Naive thymus-derived CD8-positive, alpha-beta T cell (primary cell): ENCODE measurements at regions of chrX and their contacts with region 1.

Region 1: DNA sequence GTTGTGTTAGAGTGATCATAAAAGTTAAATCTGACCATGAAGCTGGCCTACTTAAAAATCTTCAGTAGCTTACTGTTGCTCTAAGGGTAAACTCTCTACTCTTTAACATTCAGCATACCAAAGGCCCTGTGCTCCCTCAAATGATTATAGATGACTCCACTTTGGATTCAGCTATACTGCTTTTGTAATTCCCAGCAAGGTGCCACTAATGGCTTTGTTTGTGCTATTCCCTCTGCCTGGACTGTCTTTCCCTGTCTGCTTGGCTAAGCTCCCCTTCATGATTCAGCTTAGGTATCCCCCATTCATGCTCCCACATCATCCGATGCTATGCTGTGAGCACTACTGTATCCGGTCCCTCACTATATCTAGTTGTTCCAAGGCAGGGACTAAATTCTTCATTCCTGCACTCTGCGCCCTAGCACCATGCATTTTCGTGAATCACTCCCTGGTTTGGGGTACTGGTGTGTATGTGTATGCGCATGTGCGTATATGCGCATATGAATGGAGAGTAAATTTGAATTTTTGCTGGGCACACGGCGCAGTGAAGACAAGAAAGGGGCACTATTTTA is 453 bp upstream of the PBDC1 start:
- DNase-seq: no peak
- ATAC-seq: peak; percentile 52 to 56
- H3K4me3 Mint-ChIP-seq: peak overlapping the region; percentile 85 to 97 (median 95)
- H3K27ac Mint-ChIP-seq: peak overlapping the region; percentile 94 to 99 (median 96)
- H3K4me1 Mint-ChIP-seq: peaks cover 25 to 57% (median 55%) of the 10 kb centered on the region in 4 donors
- H3K27me3 Mint-ChIP-seq: no peaks in the 10 kb centered on the region

Region 2: DNA sequence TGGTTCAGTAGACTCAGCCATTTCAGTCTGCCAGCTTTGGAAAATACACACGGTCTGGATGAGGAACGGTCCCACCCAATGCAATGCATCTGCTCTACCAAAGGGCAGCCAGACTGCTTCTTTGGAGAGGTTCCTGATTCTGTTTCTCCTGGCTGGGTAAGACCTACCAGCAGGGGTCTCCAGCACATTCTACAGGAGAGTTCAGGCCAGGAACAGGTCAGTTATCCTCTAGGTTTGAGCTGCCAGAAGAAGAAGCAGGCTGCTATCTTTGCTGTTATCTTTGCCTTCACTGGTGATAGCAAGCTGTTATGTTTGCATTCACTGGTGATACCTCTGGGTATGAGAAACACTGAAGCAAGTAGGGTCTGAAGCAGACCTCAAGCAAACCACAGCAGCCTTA is 45.1 kb before region 1 on chrX:
- POLR2A ChIA-PET with region 1: no interaction called
- DNase-seq: no peak
- ATAC-seq: no peak
- H3K4me3 Mint-ChIP-seq: no peak overlapping the region
- H3K27ac Mint-ChIP-seq: no peak overlapping the region
- H3K4me1 Mint-ChIP-seq: no peaks in the 10 kb centered on the region
- H3K27me3 Mint-ChIP-seq: peaks cover 0 to 5% (median 3%) of the 10 kb centered on the region in 5 donors

Region 3: GRCh38 chrX:76148753-76149152 is 23.7 kb before region 1 on chrX:
- POLR2A ChIA-PET with region 1: interaction called, 14 read pairs
- DNase-seq: peak; percentile 13 to 82 (median 58)
- ATAC-seq: peak; percentile 40 to 51
- H3K4me3 Mint-ChIP-seq: peak overlapping the region; percentile 74 to 87 (median 84)
- H3K27ac Mint-ChIP-seq: peak overlapping the region; percentile 90 to 100 (median 98)
- H3K4me1 Mint-ChIP-seq: peaks cover 7 to 22% (median 16%) of the 10 kb centered on the region in 4 donors
- H3K27me3 Mint-ChIP-seq: no peaks in the 10 kb centered on the region